ENCODE measurements at regions of chr10 and their contacts with region 1.

Region 1: GRCh38 chr10:124903111-124903510 is 38.8 kb upstream of the ZRANB1 start:
- DNase-seq: no peak
- H3K4me3 ChIP-seq: no peak overlapping the region
- H3K27ac ChIP-seq: no peak overlapping the region
- H3K4me1 ChIP-seq: no peaks in the 10 kb centered on the region
- CTCF ChIP-seq: no peak

Region 2: GRCh38 chr10:124864421-124865193 is 38.5 kb before region 1 on chr10:
- CTCF ChIA-PET with region 1: no interaction called
- POLR2A ChIA-PET with region 1: no interaction called
- intact Hi-C with region 1: loop called (anchors 5 kb)
- DNase-seq: no peak
- H3K4me3 ChIP-seq: no peak overlapping the region
- H3K27ac ChIP-seq: no peak overlapping the region
- H3K4me1 ChIP-seq: no peaks in the 10 kb centered on the region
- CTCF ChIP-seq: no peak

Measured in OCI-LY7 (cell line).